ENCODE measurements at regions of chr7 and their contacts with region 1.

Region 1: GRCh38 chr7:135911099-135911498 is 66.1 kb downstream of the MTPN start:
- DNase-seq: no peak

Region 2: DNA sequence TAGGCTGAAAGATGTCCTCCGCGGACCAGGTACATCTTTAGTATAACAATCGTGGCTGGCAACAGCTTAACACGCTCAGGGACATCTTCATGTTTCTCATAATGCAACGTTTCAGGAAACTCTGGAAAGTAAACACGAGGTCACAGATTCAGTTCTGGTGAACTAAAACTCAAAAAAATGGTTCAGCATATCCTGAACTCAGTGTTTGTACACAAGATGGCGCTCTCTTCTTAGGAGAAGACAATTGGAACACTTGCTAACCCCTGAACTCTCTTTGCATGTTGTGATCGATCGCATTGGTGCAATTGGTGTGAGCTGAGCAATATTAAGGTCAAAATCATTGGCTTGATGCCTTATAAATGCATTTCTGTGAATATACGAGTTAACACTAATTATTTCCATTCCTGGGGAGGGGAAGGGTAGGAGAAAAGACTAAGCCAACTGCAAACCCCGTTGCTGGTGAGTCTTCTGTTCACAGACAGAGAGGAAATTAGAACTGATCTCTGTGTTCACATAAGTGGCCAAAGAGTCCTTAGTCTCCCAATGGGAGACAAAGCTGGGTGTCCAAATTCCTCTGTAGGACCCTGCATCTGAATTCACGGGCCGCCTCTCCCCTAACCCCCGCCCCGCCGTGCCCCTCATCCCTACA is 109.9 kb before region 1 on chr7:
- intact Hi-C with region 1: loop called (anchors 5 kb)
- DNase-seq: no peak

Region 3: GRCh38 chr7:135930565-135931461 is 19.7 kb after region 1 on chr7:
- intact Hi-C with region 1: loop called (anchors 1 kb)
- DNase-seq: no peak

Region 4: GRCh38 chr7:136086712-136087111 is 175.6 kb after region 1 on chr7:
- intact Hi-C with region 1: no loop called
- DNase-seq: no peak

Region 5: GRCh38 chr7:136389933-136390332 is 478.8 kb after region 1 on chr7:
- intact Hi-C with region 1: no loop called
- DNase-seq: no peak

Measured in cardiac septum (tissue), 1 donor.